ENCODE measurements at regions of chr12 and their contacts with region 1.

Region 1: DNA sequence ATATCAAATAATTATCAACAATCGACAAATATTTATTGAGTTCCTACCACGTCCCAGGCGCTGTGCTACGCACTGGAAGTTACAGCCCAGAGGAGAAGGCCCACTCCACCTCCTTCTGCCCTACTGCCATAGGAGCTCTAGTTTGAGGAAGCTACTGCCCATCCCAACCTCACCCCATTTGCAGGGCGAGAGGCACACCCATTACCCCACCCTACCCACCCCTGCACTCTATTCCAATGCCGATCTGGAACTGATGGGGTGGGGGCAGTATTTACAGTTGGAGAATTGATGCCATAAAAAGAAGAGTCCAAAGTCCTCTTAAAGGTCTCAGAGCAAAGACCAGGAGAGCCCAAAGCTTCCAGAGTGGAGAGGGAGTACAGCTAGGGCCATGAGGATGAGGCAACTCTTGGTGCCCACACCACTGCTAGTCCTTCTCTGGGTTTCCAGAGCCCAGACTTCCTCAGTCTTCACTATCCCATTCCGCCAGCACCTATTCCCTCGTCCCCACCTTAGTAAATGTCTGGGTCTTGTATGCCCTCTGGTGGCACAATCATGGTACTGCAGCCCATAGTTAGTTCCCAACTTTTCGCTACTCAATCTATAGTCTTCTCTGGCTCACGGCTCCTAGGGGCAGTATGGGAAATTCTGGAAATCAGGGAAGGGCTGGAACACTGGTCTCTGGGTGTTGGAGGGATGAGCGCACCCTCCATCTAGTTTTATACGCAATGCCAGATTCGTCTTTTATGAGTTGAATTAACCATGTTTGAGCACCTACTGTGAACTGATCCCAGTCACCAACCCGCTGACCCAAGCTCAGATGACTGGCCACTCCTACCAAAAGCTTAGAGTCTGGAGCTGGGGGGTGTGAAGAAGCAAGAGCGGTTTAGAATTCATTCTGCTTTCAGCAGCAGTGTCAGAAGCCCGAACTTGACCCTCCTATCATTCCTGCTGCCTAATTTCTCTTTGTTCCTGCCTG is 6.9 kb upstream of the ADCY6 start:
- DNase-seq: peak; percentile 75
- ATAC-seq: peak; percentile 97
- H3K4me3 ChIP-seq: no peak overlapping the region
- H3K27ac ChIP-seq: no peak overlapping the region
- H3K4me1 ChIP-seq: no peaks in the 10 kb centered on the region
- H3K27me3 ChIP-seq: no peaks in the 10 kb centered on the region
- CTCF ChIP-seq: peak; percentile 97
- POLR2A ChIP-seq: peak; percentile 35; the same call in 1 of the 2 replicates
- RAD21 ChIP-seq: peak; percentile 94

Region 2: DNA sequence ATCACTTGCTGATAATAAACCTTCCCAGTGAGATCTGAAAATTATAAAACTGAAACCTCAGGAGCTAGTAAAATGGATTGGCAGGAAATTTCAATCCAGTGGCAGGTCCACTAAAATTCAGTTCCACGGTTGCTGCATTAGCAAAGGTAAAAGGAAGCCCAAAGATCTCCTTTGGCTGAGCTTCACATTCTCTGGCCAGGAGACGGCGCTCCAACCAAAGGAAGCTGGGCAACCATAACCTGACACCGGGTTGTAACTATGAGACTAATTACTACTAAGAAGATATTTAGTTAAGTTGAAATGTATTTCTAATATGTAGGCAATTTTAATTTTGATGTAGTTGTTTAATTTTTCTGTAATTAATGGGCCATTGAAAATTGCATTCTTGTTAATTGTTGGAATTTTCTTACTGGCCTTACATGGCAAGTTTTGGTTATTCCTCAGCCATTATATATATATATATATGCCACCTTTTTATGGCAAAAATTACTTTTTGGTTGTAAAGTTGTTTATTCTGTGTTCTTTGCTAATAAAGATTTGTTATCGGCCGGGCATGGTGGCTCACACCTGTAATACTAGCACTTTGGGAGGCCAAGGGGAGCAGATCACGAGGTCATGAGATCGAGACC is 253.4 kb before region 1 on chr12:
- CTCF ChIA-PET with region 1: interaction called, 3 read pairs
- POLR2A ChIA-PET with region 1: no interaction called
- dilution Hi-C with region 1: no loop called
- in situ Hi-C with region 1: loop called (anchors 25 kb)
- intact Hi-C with region 1: no loop called
- DNase-seq: peak; percentile 31
- ATAC-seq: peak; percentile 84
- H3K4me3 ChIP-seq: no peak overlapping the region
- H3K27ac ChIP-seq: no peak overlapping the region
- H3K4me1 ChIP-seq: no peaks in the 10 kb centered on the region
- H3K27me3 ChIP-seq: peaks cover 4% of the 10 kb centered on the region; the same call in 1 of the 2 replicates
- CTCF ChIP-seq: peak; percentile 62
- POLR2A ChIP-seq: no peak
- RAD21 ChIP-seq: peak; percentile 66

Region 3: DNA sequence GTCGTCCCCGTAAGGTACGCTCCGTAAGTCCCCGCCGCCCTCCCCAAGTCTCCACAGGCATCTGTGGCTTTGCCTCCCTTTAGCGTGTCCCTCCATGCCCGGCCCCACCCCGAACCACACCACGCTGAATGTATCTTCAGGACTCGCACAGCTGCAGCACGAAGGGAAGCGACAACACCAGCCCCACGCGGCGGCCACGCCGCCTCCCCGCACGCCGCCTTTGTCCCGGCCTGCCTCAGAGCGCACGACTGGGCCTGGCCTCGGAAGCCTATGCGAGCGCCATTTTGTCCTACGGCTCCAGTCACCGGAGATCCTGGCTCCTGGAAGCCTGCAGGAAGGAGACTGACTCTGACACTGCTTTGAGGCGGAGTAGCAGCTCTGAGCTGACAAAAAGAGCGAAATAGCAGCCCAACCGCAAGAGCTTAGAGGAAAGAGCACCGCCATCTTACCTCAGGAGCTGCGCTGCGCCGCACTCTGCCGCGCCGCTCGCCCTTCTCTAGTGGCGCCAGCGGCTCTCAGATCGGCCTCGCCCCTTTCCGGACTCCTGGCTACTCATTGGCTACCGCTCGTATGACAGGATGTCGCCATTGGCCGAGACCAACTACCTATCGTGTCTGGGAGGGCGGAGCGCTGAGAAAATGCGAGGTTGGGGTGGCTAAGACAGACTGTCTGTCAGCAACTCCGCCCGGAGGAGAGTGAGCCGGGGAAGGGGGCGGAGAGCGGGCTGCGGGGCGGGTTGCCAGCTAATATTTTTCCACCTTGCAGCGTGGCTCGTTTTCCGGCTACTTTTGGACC is 113.8 kb before region 1 on chr12 and contains the start of gene KANSL2:
- CTCF ChIA-PET with region 1: no interaction called
- POLR2A ChIA-PET with region 1: no interaction called
- dilution Hi-C with region 1: no loop called
- in situ Hi-C with region 1: no loop called
- intact Hi-C with region 1: loop called (anchors 5 kb)
- DNase-seq: peak; percentile 99
- ATAC-seq: peak; percentile 97
- H3K4me3 ChIP-seq: peak within 1 kb of the TSS; percentile 88
- H3K27ac ChIP-seq: peak within 1 kb of the TSS; percentile 93
- H3K4me1 ChIP-seq: peaks cover 4% of the 10 kb centered on the region
- H3K27me3 ChIP-seq: no peaks in the 10 kb centered on the region
- CTCF ChIP-seq: no peak
- POLR2A ChIP-seq: peak; percentile 99
- RAD21 ChIP-seq: no peak
- total RNA-seq, gene KANSL2: 46.4 and 47.5 TPM in 2 replicates

Region 4: GRCh38 chr12:48758221-48758620 is 37.5 kb before region 1 on chr12:
- CTCF ChIA-PET with region 1: interaction called, 9 read pairs
- POLR2A ChIA-PET with region 1: interaction called, 17 read pairs
- dilution Hi-C with region 1: no loop called
- in situ Hi-C with region 1: loop called (anchors 5 kb)
- intact Hi-C with region 1: loop called (anchors 1 kb)
- DNase-seq: no peak
- ATAC-seq: no peak
- H3K4me3 ChIP-seq: no peak overlapping the region
- H3K27ac ChIP-seq: no peak overlapping the region
- H3K4me1 ChIP-seq: no peaks in the 10 kb centered on the region
- H3K27me3 ChIP-seq: no peaks in the 10 kb centered on the region
- CTCF ChIP-seq: no peak
- POLR2A ChIP-seq: no peak
- RAD21 ChIP-seq: no peak

Region 5: DNA sequence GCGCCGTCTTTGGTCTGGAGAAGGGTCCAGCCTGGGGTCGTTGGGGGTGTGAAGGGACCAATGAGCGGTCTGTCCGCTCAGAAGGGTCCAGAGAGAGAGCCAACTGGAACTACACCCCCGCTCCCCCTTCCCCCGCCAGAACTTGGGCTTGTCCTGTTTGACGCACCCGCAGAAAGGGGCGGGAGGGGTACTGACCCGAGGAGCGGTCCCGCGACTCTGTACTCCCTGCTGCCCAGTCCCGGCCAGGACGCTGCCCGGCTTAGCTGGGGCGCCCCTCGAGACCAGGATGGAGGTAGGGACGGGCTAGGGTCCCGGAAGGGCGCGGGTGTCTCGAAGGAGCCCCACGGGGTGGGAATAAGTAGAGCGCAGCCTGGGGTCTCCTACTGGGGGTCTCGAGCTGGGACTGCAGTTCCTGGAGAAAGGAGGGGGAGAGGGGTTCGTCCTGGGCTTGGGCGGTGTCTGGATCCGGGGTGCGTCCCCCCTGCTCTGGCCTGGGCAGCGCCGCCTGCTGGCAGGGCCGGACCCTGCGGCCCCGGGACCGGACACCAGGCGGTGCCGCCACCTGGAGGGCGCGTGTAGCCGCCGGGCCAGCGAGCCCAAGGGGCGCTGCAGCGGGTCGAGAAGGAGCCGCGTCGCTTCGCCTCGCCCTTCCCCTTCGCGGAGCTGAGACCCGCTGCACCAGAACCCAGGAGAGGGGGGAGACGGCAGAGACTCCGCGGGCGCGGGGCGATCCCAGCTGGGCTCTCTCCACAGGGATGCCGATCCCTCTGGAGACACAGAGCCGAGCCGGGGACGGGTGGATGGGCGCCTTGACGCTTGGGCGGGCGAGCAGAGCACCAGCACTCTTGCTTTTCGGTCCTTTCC is 18.7 kb after region 1 on chr12:
- CTCF ChIA-PET with region 1: interaction called, 11 read pairs
- POLR2A ChIA-PET with region 1: interaction called, 3 read pairs
- dilution Hi-C with region 1: no loop called
- in situ Hi-C with region 1: no loop called
- intact Hi-C with region 1: loop called (anchors 2 kb)
- DNase-seq: peak; percentile 75
- ATAC-seq: peak; percentile 52
- H3K4me3 ChIP-seq: peak overlapping the region; percentile 55
- H3K27ac ChIP-seq: peak overlapping the region; percentile 97
- H3K4me1 ChIP-seq: peaks cover 39% of the 10 kb centered on the region
- H3K27me3 ChIP-seq: no peaks in the 10 kb centered on the region
- CTCF ChIP-seq: peak; percentile 100
- POLR2A ChIP-seq: 0 out of 2 replicates have a peak, but pooled peaks have one; percentile 22
- RAD21 ChIP-seq: peak; percentile 64